ENCODE measurements at regions of chr1 and their contacts with region 1.

Region 1: GRCh38 chr1:154324669-154325582 is at the start of gene ATP8B2:
- DNase-seq: peak; percentile 89
- ATAC-seq: peak; percentile 69
- H3K4me3 Mint-ChIP-seq: peak within 1 kb of the TSS; percentile 100
- H3K27ac Mint-ChIP-seq: peak within 1 kb of the TSS; percentile 96
- H3K4me1 Mint-ChIP-seq: peaks cover 39% of the 10 kb centered on the region
- H3K27me3 Mint-ChIP-seq: no peaks in the 10 kb centered on the region
- CTCF ChIP-seq: peak; percentile 96
- total RNA-seq, gene ATP8B2: 52.2 to 54.7 TPM

Region 2: GRCh38 chr1:154129391-154129970 is 195.4 kb before region 1 on chr1:
- CTCF ChIA-PET with region 1: no interaction called
- POLR2A ChIA-PET with region 1: no interaction called
- intact Hi-C with region 1: no loop called
- DNase-seq: no peak
- ATAC-seq: no peak
- H3K4me3 Mint-ChIP-seq: no peak overlapping the region
- H3K27ac Mint-ChIP-seq: no peak overlapping the region
- H3K4me1 Mint-ChIP-seq: peaks cover 10% of the 10 kb centered on the region
- H3K27me3 Mint-ChIP-seq: no peaks in the 10 kb centered on the region
- CTCF ChIP-seq: no peak

Region 3: DNA sequence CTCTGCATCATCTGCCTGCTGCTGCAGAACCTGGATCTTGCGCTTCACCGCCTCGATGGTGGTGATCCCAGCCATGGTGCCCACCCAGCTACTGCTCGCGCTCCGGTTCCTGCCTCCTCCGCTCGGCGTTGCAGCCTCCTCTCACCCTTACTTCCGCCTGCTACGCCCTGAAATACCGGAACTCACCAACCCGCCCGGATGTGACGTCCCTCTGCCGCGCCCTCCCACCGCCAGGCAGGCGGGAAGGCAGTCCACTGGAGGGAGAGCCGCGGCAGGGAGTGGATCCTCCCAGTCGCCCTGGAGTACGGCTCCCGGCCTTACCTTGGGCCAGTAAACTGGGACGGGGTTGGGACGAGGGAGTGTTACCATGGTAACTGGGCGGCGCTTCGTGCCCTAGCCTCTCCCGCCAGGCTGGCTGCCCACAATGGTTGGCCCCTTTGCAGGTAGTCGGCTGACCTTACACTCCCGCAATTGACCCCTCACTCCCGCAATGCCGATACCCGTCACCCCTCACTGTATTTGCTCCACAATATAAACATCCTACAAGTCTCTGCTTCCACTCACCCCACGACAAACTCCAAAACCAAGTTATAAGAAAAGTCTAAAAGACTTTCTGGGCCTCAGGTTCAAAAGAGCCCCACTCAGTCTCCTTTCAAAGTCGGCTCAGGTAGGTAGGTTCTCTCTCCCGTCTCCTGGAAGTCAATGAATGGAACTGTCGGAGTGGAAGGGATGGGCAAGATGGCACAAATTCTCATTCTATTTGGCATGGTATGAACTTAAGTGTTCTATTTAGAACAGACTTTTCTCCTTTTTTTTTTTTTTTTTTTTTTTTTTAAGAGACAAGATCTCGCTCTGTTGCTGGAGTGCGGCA is 141.6 kb before region 1 on chr1:
- CTCF ChIA-PET with region 1: interaction called, 3 read pairs
- POLR2A ChIA-PET with region 1: interaction called, 3 read pairs
- intact Hi-C with region 1: loop called (anchors 5 kb)
- DNase-seq: peak; percentile 97
- ATAC-seq: peak; percentile 74
- H3K4me3 Mint-ChIP-seq: peak overlapping the region; percentile 97
- H3K27ac Mint-ChIP-seq: peak overlapping the region; percentile 99
- H3K4me1 Mint-ChIP-seq: peaks cover 41% of the 10 kb centered on the region
- H3K27me3 Mint-ChIP-seq: no peaks in the 10 kb centered on the region
- CTCF ChIP-seq: no peak

Region 4: GRCh38 chr1:154256686-154257085 is 68.2 kb before region 1 on chr1:
- CTCF ChIA-PET with region 1: no interaction called
- POLR2A ChIA-PET with region 1: no interaction called
- intact Hi-C with region 1: no loop called
- DNase-seq: no peak
- ATAC-seq: no peak
- H3K4me3 Mint-ChIP-seq: no peak overlapping the region
- H3K27ac Mint-ChIP-seq: peak overlapping the region; percentile 23
- H3K4me1 Mint-ChIP-seq: peaks cover 2% of the 10 kb centered on the region
- H3K27me3 Mint-ChIP-seq: no peaks in the 10 kb centered on the region
- CTCF ChIP-seq: no peak

Region 5: GRCh38 chr1:154304664-154305337 is 20.1 kb before region 1 on chr1:
- CTCF ChIA-PET with region 1: interaction called, 12 read pairs
- POLR2A ChIA-PET with region 1: interaction called, 3 read pairs
- intact Hi-C with region 1: no loop called
- DNase-seq: peak; percentile 74
- ATAC-seq: peak; percentile 94
- H3K4me3 Mint-ChIP-seq: no peak overlapping the region
- H3K27ac Mint-ChIP-seq: no peak overlapping the region
- H3K4me1 Mint-ChIP-seq: peaks cover 15% of the 10 kb centered on the region
- H3K27me3 Mint-ChIP-seq: no peaks in the 10 kb centered on the region
- CTCF ChIP-seq: no peak

Region 6: DNA sequence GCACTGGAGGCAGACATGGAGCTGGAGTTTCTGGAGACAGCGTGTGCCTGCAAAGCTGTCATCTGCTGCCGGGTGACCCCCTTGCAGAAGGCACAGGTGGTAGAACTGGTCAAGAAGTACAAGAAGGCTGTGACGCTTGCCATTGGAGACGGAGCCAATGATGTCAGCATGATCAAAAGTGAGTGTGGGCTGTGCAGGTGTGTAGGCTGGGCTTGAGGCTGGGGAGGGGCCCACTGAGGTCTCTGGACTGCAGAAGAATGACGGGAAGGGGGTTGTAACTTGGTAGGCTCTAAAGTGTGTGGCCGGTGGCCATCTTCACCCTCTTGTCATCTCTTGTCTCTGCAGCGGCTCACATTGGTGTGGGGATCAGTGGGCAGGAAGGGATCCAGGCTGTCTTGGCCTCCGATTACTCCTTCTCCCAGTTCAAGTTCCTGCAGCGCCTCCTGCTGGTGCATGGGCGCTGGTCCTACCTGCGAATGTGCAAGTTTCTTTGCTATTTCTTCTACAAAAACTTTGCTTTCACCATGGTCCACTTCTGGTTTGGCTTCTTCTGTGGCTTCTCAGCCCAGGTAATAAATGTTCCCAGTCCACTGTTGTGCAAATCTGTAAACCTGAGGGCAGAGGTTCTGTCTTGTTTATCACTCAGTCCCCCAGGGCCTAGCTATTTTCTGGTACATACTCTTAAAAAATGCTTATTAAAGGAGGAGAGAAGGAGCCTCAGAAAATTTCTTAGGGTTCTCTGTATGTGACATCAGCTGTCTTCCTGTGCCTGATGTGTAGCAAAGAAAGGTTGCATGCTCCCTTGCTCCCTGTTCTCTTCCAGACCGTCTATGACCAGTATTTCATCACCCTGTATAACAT is 20.3 kb after region 1 on chr1:
- CTCF ChIA-PET with region 1: interaction called, 214 read pairs
- POLR2A ChIA-PET with region 1: interaction called, 27 read pairs
- intact Hi-C with region 1: no loop called
- DNase-seq: peak; percentile 81
- ATAC-seq: no peak
- H3K4me3 Mint-ChIP-seq: no peak overlapping the region
- H3K27ac Mint-ChIP-seq: peak overlapping the region; percentile 78
- H3K4me1 Mint-ChIP-seq: peaks cover 76% of the 10 kb centered on the region
- H3K27me3 Mint-ChIP-seq: no peaks in the 10 kb centered on the region
- CTCF ChIP-seq: peak; percentile 84

Region 7: DNA sequence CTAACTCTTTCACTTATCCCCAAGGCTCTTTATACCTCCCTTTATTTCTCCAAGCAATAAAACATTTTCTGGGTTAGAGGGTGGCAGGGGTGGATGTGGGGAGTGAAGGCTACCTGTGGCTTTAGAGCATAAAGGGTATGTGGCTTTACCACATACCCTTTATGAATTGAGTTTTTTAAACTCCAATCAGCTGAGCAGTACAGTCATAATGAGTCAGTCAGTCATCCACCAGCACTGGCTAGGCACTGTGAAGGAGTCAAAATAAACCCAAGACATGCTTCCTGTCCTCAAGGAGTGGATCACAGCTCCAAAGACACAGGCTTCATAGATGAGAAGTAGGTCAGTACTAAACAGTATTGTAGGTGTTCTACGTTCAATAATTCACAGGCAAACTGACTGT is 174.5 kb after region 1 on chr1:
- CTCF ChIA-PET with region 1: no interaction called
- POLR2A ChIA-PET with region 1: no interaction called
- intact Hi-C with region 1: no loop called
- DNase-seq: peak; percentile 16
- ATAC-seq: peak; percentile 74
- H3K4me3 Mint-ChIP-seq: no peak overlapping the region
- H3K27ac Mint-ChIP-seq: no peak overlapping the region
- H3K4me1 Mint-ChIP-seq: peaks cover 19% of the 10 kb centered on the region
- H3K27me3 Mint-ChIP-seq: peaks cover 40% of the 10 kb centered on the region
- CTCF ChIP-seq: no peak

Region 8: GRCh38 chr1:154536570-154536969 is 211.6 kb after region 1 on chr1:
- CTCF ChIA-PET with region 1: no interaction called
- POLR2A ChIA-PET with region 1: no interaction called
- intact Hi-C with region 1: no loop called
- DNase-seq: no peak
- ATAC-seq: no peak
- H3K4me3 Mint-ChIP-seq: no peak overlapping the region
- H3K27ac Mint-ChIP-seq: no peak overlapping the region
- H3K4me1 Mint-ChIP-seq: no peaks in the 10 kb centered on the region
- H3K27me3 Mint-ChIP-seq: peaks cover 7% of the 10 kb centered on the region
- CTCF ChIP-seq: no peak